ENCODE measurements at regions of chr9 and their contacts with region 1.

Region 1: GRCh38 chr9:127877566-127877998 is at the start of gene AK1:
- DNase-seq: peak; percentile 88 to 93 (median 89)
- ATAC-seq: peak; percentile 14 to 81 (median 76)
- H3K4me3 ChIP-seq: peak within 1 kb of the TSS; percentile 55 to 94 (median 66)
- H3K27ac ChIP-seq: peak within 1 kb of the TSS; percentile 64 to 98 (median 92)
- H3K4me1 ChIP-seq: peaks cover 3 to 63% (median 43%) of the 10 kb centered on the region in 12 donors
- H3K27me3 ChIP-seq: no peaks in the 10 kb centered on the region
- CTCF ChIP-seq: peak in 1 of 12 donors; percentile 10
- POLR2A ChIP-seq: peak in 1 of 2 donors; percentile 83
- total RNA-seq, gene AK1: 415 to 810 (median 586) TPM

Region 2: GRCh38 chr9:127802576-127803443 is 74.8 kb before region 1 on chr9 and contains the start of gene FPGS:
- intact Hi-C with region 1: loop called in 5 of 10 experiments (anchors 5 kb)
- DNase-seq: peak; percentile 92 to 95 (median 93)
- ATAC-seq: peak; percentile 80 to 94 (median 92)
- H3K4me3 ChIP-seq: peak within 1 kb of the TSS; percentile 51 to 87 (median 76)
- H3K27ac ChIP-seq: peak within 1 kb of the TSS; percentile 86 to 97 (median 95)
- H3K4me1 ChIP-seq: peaks cover 5 to 32% (median 19%) of the 10 kb centered on the region in 12 donors
- H3K27me3 ChIP-seq: no peaks in the 10 kb centered on the region
- CTCF ChIP-seq: no peak
- POLR2A ChIP-seq: peak in 1 of 2 donors; percentile 53
- total RNA-seq, gene FPGS: 39.9 to 55.1 (median 41.5) TPM